Activated CD4-positive, alpha-beta memory T cell treated with anti-CD3 and anti-CD28 coated beads for 36 hours (primary cell): ENCODE measurements at regions of chr12 and their contacts with region 1.

Region 1: GRCh38 chr12:111396726-111397445 is 8.8 kb upstream of the SH2B3 start:
- DNase-seq: peak; percentile 90
- H3K4me3 Mint-ChIP-seq: peak overlapping the region; percentile 65
- H3K27ac Mint-ChIP-seq: peak overlapping the region; percentile 51
- H3K4me1 Mint-ChIP-seq: peaks cover 25% of the 10 kb centered on the region
- H3K27me3 Mint-ChIP-seq: peaks cover 9% of the 10 kb centered on the region

Region 2: DNA sequence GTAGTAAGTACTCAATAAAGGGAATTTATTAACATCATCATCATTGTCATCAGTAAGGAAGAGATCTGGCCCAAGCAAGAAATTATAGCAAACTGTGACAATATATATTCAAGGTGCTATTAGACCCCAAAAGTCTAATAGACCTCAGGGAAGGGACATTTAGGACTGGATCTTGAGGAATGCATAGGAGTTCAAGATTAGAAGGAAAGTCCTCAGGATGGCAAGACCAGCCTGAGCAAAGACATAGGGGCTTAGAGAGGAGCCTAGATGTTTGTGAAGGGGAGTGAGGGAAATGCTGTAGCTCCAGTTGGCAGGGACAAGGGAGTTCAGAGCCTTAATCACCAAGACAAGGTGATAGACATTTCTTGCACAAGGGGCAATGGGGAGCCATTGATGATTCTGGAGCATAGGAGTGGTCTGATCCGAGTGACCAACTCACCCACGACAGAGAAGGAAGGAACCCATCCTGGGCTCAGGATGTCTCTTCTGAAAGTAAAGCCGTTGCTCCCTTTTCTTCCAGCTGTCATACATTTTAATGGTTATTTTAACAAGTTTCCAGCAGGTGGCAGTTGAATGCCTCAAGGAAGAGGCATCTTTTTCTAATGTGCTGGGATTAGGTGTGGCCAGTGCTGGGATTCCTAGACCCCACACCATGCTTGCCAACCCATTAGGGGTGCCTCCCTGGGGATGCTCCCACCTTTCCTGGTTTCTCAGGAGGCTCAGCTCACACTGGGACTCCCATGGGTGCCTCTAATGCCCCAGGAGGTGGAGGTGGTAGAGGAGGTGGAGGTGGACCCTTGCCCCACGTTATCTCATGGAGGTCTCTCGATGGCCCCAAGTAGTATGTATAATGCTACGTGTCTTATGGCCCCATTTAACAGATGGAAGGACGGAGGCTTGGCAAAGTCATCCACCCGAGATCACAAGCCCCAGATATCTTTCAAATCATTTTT is 65.8 kb before region 1 on chr12:
- CTCF ChIA-PET with region 1: interaction called, 16 read pairs
- POLR2A ChIA-PET with region 1: no interaction called
- intact Hi-C with region 1: no loop called
- DNase-seq: no peak
- H3K4me3 Mint-ChIP-seq: no peak overlapping the region
- H3K27ac Mint-ChIP-seq: no peak overlapping the region
- H3K4me1 Mint-ChIP-seq: no peaks in the 10 kb centered on the region
- H3K27me3 Mint-ChIP-seq: peaks cover 12% of the 10 kb centered on the region

Region 3: GRCh38 chr12:111428728-111429175 is 31.9 kb after region 1 on chr12:
- CTCF ChIA-PET with region 1: interaction called, 1,161 read pairs
- POLR2A ChIA-PET with region 1: no interaction called
- intact Hi-C with region 1: no loop called
- DNase-seq: peak; percentile 50
- H3K4me3 Mint-ChIP-seq: peak overlapping the region; percentile 74
- H3K27ac Mint-ChIP-seq: peak overlapping the region; percentile 80
- H3K4me1 Mint-ChIP-seq: peaks cover 90% of the 10 kb centered on the region
- H3K27me3 Mint-ChIP-seq: no peaks in the 10 kb centered on the region

Region 4: DNA sequence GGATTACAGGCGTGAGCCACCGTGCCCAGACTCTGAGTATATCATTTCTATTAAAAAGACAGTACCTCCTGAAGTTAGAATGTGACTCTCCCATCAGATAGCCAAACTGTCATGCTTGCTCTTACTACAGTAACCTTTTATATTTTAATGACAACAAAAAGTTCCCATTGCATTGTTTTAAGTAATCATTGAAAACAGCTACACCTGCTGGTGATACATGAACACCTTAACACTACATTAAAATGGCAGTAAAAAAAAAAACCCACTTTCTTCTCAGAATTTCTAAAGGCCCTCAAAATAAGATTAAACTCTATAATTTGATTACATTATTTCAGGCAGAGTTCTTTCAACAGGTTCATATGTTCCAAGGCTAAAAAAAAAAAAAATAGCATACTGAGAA is 85.6 kb after region 1 on chr12:
- CTCF ChIA-PET with region 1: interaction called, 39 read pairs
- POLR2A ChIA-PET with region 1: no interaction called
- intact Hi-C with region 1: no loop called
- DNase-seq: no peak
- H3K4me3 Mint-ChIP-seq: no peak overlapping the region
- H3K27ac Mint-ChIP-seq: no peak overlapping the region
- H3K4me1 Mint-ChIP-seq: no peaks in the 10 kb centered on the region
- H3K27me3 Mint-ChIP-seq: no peaks in the 10 kb centered on the region

Region 5: GRCh38 chr12:111529424-111530368 is 132.8 kb after region 1 on chr12:
- CTCF ChIA-PET with region 1: interaction called, 75 read pairs
- POLR2A ChIA-PET with region 1: no interaction called
- intact Hi-C with region 1: loop called (anchors 1 kb)
- DNase-seq: peak; percentile 78
- H3K4me3 Mint-ChIP-seq: no peak overlapping the region
- H3K27ac Mint-ChIP-seq: peak overlapping the region; percentile 44
- H3K4me1 Mint-ChIP-seq: peaks cover 12% of the 10 kb centered on the region
- H3K27me3 Mint-ChIP-seq: no peaks in the 10 kb centered on the region

Region 6: DNA sequence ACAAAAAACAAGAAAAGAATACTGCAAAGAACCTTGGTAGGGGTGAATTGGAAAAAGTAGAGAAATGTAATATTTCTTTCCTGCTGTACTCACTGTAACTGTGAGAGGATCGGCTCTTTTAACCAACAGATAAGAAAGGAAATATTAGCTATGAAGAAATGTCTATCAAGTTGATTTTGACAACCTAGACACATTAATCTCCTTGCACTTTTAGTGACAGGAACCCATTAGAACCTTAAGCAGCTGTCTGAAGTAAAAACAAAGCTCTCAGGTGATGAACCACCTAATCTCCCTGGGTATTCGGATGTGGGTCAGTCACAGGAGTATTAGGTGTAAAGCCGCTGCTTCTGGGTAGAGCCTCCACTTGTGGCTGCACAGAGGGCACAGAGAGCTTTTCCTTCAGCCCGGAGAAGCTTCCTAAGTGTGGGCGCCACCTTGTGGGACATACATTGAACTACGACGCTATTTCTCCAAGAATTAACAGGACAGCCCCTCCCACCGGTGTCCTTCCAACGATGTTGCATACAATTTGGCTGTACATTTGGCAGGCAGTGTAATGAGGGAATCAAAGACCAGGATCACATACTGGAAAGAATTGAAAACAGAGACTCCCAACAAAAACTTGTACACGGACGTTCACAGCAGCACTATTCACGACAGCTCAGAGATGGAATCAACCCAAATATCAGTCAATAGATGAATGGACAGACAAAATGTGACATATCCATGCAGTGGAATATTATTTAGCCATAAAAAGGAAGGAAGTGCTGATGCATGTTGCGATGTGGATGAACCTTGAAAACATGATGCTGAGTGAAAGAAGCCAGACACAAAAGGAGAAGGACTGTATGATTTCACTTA is 416.2 kb after region 1 on chr12:
- CTCF ChIA-PET with region 1: interaction called, 13 read pairs
- POLR2A ChIA-PET with region 1: no interaction called
- intact Hi-C with region 1: loop called (anchors 1 kb)
- DNase-seq: peak; percentile 79
- H3K4me3 Mint-ChIP-seq: no peak overlapping the region
- H3K27ac Mint-ChIP-seq: no peak overlapping the region
- H3K4me1 Mint-ChIP-seq: peaks cover 7% of the 10 kb centered on the region
- H3K27me3 Mint-ChIP-seq: no peaks in the 10 kb centered on the region

Region 7: GRCh38 chr12:111953455-111953854 is 556.6 kb after region 1 on chr12:
- CTCF ChIA-PET with region 1: no interaction called
- POLR2A ChIA-PET with region 1: no interaction called
- intact Hi-C with region 1: no loop called
- DNase-seq: no peak
- H3K4me3 Mint-ChIP-seq: no peak overlapping the region
- H3K27ac Mint-ChIP-seq: no peak overlapping the region
- H3K4me1 Mint-ChIP-seq: peaks cover 31% of the 10 kb centered on the region
- H3K27me3 Mint-ChIP-seq: no peaks in the 10 kb centered on the region